ENCODE measurements at regions of chr3 and their contacts with region 1.

Region 1: GRCh38 chr3:15726043-15726442 is 71.7 kb downstream of the ANKRD28 start:
- DNase-seq: no peak
- H3K4me3 ChIP-seq: no peak overlapping the region
- H3K27ac ChIP-seq: no peak overlapping the region
- H3K4me1 ChIP-seq: no peaks in the 10 kb centered on the region
- H3K27me3 ChIP-seq: no peaks in the 10 kb centered on the region
- CTCF ChIP-seq: no peak
- POLR2A ChIP-seq: no peak

Region 2: DNA sequence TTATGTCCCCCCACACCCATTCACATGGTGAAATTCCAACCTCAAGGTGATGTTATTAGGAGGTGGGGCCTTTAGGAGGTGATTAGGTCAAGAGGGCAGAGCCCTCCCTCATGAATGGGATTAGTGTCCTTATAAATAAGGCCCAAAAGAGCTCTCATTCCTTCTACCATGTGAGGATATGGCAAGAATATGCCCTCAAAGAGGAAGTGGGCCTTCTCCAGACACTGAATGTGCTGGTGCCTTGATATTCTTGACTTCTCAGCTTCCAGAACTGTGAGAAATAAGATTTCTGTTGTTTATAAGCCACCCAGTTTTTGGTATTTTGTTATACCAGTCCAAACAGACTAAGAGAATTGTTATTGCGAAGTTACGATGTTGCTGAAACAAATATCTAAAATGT is 22.7 kb before region 1 on chr3:
- CTCF ChIA-PET with region 1: no interaction called
- POLR2A ChIA-PET with region 1: no interaction called
- dilution Hi-C with region 1: no loop called
- intact Hi-C with region 1: loop called (anchors 2 kb)
- DNase-seq: no peak
- H3K4me3 ChIP-seq: no peak overlapping the region
- H3K27ac ChIP-seq: no peak overlapping the region
- H3K4me1 ChIP-seq: no peaks in the 10 kb centered on the region
- H3K27me3 ChIP-seq: no peaks in the 10 kb centered on the region
- CTCF ChIP-seq: no peak
- POLR2A ChIP-seq: no peak

Region 3: DNA sequence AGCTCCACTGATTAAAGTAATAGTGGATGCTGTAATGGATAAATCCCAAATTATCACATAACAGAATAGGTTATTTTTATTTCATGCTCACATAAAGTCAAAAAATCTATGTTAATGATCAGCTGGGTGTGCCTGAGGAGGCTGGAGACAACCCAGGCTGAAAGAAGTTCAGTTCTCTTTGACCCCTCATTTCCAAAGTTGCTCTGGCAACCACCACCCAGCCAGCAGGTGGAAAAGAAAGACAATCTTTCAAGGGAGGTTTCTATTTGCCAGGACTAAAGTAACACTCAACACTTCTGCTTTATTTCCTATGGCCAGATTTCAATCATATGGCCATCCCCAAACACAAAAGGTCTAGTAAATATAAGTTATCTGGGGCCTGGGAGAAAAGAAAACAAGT is 120.6 kb after region 1 on chr3:
- CTCF ChIA-PET with region 1: no interaction called
- POLR2A ChIA-PET with region 1: no interaction called
- dilution Hi-C with region 1: no loop called
- intact Hi-C with region 1: no loop called
- DNase-seq: no peak
- H3K4me3 ChIP-seq: no peak overlapping the region
- H3K27ac ChIP-seq: no peak overlapping the region
- H3K4me1 ChIP-seq: no peaks in the 10 kb centered on the region
- H3K27me3 ChIP-seq: no peaks in the 10 kb centered on the region
- CTCF ChIP-seq: no peak
- POLR2A ChIP-seq: no peak

Measured in endothelial cell of umbilical vein (primary cell).